Dorsolateral prefrontal cortex (tissue), 120 donors: ENCODE measurements at regions of chr3 and their contacts with region 1.

Region 1: DNA sequence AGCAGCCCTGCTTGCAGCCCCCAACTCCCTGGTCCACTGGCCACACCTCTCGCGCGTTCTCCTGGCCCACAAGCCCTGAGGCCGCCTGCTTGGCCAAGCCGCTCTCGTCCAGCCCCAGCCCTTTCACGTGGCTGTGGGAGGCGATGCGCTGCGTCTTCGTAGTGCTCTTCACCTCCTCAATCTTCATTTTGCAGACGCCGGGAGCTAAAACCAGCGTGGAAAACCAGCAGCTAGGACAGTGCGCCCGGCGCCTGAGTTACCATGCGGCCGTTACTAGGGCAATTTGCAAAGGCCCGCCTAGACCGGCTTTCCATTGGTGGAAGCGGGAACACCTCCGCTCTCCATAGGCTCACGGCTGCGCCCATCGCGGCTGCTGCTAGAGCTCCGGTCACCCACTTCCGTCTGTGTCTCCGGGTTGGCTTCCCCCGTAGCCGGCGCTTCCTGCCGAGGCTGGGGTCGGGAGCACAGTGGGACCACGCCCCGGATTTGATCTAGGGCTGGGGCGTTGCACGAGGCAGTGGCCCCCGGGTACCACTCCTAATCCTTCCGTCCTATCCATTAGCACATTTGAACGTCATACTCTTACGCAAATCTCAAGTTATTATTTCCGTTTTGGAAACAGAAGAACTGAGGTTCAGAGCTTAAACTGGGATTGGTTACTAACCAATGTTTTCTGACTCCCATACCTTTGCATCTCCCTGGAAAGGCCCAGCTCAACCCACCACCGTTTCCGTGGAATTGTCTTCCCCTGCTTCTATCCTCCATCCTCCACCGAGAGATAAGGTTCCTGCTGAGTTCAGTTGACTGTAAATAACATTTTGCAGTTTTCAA is at the start of gene RUVBL1:
- DNase-seq: peak; percentile 90 to 99 (median 98)
- H3K4me3 ChIP-seq: peak within 1 kb of the TSS; percentile 71 to 100 (median 88)
- H3K27ac ChIP-seq: peak within 1 kb of the TSS in 50 of 59 donors; percentile 4 to 81 (median 64)
- H3K27me3 ChIP-seq: peaks cover 0 to 4% (median 0%) of the 10 kb centered on the region in 45 donors
- CTCF ChIP-seq: peak in 31 of 56 donors; percentile 6 to 55 (median 27)
- total RNA-seq, gene RUVBL1: 13.0 to 28.3 (median 18.2) TPM

Region 2: DNA sequence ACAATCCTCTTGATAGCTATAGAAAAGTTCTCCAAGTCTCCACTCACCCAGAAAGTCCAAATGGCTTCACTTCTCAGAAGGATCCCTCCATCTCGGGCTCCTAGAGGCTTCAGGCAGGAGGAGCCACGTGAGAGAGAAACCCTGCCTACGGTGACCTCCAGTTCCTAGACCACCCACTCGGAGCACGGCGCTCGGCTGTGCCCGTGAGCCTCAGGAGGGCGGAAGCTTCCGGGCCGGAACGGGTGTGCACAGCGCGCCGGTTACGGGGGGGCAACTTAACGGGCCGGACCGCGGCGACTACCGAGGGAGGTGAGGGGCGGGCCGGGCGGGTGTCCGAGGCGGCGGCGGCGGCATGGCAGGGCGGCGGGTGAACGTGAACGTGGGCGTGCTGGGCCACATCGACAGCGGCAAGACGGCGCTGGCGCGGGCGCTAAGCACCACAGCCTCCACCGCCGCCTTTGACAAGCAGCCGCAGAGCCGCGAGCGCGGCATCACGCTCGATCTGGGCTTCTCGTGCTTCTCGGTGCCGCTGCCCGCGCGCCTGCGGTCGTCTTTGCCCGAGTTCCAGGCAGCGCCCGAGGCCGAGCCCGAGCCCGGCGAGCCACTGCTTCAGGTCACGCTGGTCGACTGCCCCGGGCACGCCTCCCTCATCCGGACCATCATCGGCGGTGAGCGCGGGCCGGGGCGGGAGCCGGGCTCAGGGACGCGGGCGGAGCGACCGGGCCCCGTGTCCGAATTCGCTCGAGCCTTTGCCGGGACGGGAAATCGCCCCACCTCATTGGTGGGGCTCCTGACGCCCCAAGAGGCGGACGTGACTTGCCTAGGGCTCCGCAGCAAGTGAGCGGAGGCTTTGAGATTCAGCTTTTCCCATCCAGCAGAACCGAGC is 29.6 kb after region 1 on chr3 and contains the start of gene EEFSEC:
- intact Hi-C with region 1: loop called (anchors 1 to 2 kb)
- DNase-seq: peak; percentile 61 to 89 (median 73)
- H3K4me3 ChIP-seq: peak within 1 kb of the TSS; percentile 74 to 99 (median 93)
- H3K27ac ChIP-seq: peak within 1 kb of the TSS in 55 of 59 donors; percentile 8 to 94 (median 82)
- H3K27me3 ChIP-seq: no peaks in the 10 kb centered on the region
- CTCF ChIP-seq: peak in 33 of 56 donors; percentile 8 to 57 (median 28)
- total RNA-seq, gene EEFSEC: 5.7 to 16.9 (median 12.9) TPM

Region 3: GRCh38 chr3:128805772-128806171 is 682.0 kb after region 1 on chr3:
- intact Hi-C with region 1: no loop called
- DNase-seq: no peak
- H3K4me3 ChIP-seq: no peak overlapping the region
- H3K27ac ChIP-seq: peak overlapping the region in 24 of 59 donors; percentile 8 to 80 (median 45)
- H3K27me3 ChIP-seq: no peaks in the 10 kb centered on the region
- CTCF ChIP-seq: no peak